PC-9 (cell line): ENCODE measurements at regions of chr4 and their contacts with region 1.

Region 1: GRCh38 chr4:101347557-101348366 is 436 bp upstream of the PPP3CA start:
- DNase-seq: peak; percentile 78 to 95
- H3K4me3 ChIP-seq: peak overlapping the region; percentile 92
- H3K27ac ChIP-seq: peak overlapping the region; percentile 83
- H3K4me1 ChIP-seq: peaks cover 30% of the 10 kb centered on the region
- H3K27me3 ChIP-seq: no peaks in the 10 kb centered on the region
- CTCF ChIP-seq: no peak

Region 2: DNA sequence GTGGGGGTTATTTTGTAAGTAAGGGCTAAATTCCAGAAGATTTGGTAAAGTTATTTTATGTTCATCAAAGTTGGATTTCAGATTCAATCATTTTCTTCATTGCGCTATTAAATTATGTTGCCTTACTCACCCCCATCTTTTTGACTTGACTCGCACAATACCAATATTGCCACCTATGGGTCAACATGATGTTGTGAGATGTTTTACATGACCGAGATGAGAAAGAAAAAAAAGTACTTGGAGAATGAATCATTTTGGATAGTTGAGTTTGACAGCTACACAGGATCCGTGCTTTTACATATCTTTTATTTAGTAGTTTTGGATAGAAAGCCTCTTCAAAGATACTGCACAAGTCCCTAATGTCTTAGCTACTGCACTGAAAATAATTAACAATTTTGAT is 605.7 kb before region 1 on chr4:
- CTCF ChIA-PET with region 1: no interaction called
- POLR2A ChIA-PET with region 1: no interaction called
- intact Hi-C with region 1: loop called (anchors 10 kb)
- DNase-seq: peak in 1 of 2 experiments; percentile 38
- H3K4me3 ChIP-seq: no peak overlapping the region
- H3K27ac ChIP-seq: no peak overlapping the region
- H3K4me1 ChIP-seq: peaks cover 14% of the 10 kb centered on the region
- H3K27me3 ChIP-seq: no peaks in the 10 kb centered on the region
- CTCF ChIP-seq: peak; percentile 52

Region 3: GRCh38 chr4:101135371-101136010 is 212.3 kb before region 1 on chr4:
- CTCF ChIA-PET with region 1: no interaction called
- POLR2A ChIA-PET with region 1: no interaction called
- intact Hi-C with region 1: no loop called
- DNase-seq: no peak
- H3K4me3 ChIP-seq: no peak overlapping the region
- H3K27ac ChIP-seq: no peak overlapping the region
- H3K4me1 ChIP-seq: no peaks in the 10 kb centered on the region
- H3K27me3 ChIP-seq: no peaks in the 10 kb centered on the region
- CTCF ChIP-seq: no peak

Region 4: GRCh38 chr4:101191302-101192098 is 156.3 kb before region 1 on chr4:
- CTCF ChIA-PET with region 1: no interaction called
- POLR2A ChIA-PET with region 1: no interaction called
- intact Hi-C with region 1: loop called (anchors 10 kb)
- DNase-seq: no peak
- H3K4me3 ChIP-seq: no peak overlapping the region
- H3K27ac ChIP-seq: no peak overlapping the region
- H3K4me1 ChIP-seq: no peaks in the 10 kb centered on the region
- H3K27me3 ChIP-seq: no peaks in the 10 kb centered on the region
- CTCF ChIP-seq: no peak

Region 5: DNA sequence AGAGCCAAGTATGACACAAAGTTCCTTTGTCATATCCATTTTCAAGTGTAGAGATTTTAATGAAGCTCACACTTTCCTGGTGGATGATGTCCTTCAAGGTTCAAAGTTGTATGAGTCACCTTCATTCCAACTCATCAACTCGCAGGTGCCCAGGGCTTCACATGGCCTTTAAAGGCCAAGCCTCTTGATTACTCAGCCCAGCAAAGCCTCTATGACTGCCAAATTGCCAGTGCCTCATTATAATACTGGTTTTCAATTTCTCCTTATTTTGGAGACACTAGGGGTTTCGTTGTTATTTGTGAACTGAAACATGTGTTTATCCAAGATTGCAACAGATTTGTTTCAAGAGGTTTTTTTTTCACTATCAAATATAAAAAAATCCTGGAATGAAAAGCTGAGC is 45.5 kb after region 1 on chr4:
- CTCF ChIA-PET with region 1: no interaction called
- POLR2A ChIA-PET with region 1: no interaction called
- intact Hi-C with region 1: loop called (anchors 5 kb)
- DNase-seq: peak; percentile 38 to 72
- H3K4me3 ChIP-seq: no peak overlapping the region
- H3K27ac ChIP-seq: no peak overlapping the region
- H3K4me1 ChIP-seq: peaks cover 4% of the 10 kb centered on the region; the same call in 1 of the 2 replicates
- H3K27me3 ChIP-seq: no peaks in the 10 kb centered on the region
- CTCF ChIP-seq: no peak

Region 6: DNA sequence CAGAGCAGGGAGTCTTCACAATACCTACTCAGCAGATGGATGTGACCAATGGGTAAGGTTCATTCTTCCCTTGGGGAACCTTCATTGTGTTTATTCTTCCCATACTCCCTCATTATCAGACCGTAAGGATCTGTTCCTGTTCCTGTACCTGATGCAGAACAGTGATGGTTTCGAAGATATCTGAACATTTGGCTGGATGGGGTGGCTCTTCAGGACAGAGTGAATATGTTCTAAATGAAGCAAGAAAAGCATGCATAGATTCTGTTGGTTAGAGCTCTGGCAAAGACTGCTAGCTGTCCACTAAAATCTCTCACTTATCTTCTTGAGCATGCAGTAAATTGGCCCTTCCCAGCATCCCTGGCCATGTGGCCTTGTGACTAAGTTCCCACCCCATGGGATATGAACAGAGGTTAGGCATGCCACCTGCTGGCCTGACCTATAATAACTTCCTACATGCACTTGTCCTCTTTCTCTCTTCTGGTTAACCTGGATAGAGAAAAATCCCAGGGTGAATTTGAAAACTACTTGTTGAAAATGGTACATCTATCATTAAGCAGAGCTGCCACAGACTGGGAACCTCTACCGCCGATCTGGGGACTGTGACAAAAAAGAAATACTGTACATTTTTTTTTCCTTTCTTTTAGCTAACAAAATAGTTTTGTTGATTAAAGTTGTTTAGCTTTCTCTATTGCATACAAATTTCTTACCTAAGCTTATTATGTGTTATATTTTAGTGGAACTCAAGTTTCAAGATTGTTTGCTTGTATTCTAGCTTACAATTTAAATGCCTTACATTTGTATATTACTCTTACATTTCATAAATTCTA is 382.7 kb after region 1 on chr4:
- CTCF ChIA-PET with region 1: no interaction called
- POLR2A ChIA-PET with region 1: no interaction called
- intact Hi-C with region 1: loop called (anchors 10 kb)
- DNase-seq: peak in 1 of 2 experiments; percentile 36
- H3K4me3 ChIP-seq: no peak overlapping the region
- H3K27ac ChIP-seq: no peak overlapping the region
- H3K4me1 ChIP-seq: no peaks in the 10 kb centered on the region
- H3K27me3 ChIP-seq: no peaks in the 10 kb centered on the region
- CTCF ChIP-seq: peak; percentile 73